GM12878 (cell line): ENCODE measurements at regions of chrX and their contacts with region 1.

Region 1: DNA sequence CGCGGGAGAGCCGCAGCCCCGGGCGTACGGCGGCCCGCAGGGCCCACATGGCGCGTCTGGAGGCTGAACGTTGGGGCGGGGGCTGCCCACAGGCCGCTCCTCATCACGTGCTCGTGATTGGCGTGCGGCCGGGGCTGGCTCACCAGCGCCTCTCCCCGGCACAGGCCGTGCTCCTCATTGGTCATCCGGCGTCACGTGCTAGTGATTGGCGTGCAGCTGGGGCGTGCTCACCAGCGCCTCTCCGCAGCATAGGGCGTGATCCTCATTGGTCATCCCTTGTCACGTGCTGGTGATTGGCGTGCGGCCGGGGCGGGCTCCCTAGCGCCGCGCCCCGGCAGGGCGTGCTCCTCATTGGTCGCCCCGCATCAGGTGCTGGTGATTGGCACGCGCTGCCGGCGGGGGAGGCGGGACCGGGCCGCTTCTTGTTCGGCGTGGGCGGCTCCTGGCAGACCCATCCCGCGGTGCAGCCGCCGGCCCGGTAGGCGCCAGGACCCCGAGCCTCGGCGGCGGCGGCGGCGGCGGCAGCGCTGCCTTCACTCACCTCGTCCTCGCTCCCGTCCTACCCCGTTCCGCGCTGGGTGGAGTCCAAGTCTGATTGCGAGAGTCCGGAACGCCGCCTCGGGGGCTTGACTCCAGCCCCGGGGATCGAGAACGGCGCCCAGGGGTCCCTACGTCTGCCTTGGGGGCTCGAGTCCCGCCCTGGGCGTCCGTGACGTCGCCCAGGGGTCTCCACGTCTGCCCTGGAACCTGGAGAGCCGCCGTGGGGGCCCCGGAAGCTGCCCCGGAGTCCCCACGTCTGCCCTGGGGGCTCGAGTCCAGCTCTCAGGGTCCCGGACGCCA is at the start of gene GTPBP6:
- DNase-seq: peak; percentile 99
- ATAC-seq: peak; percentile 84
- H3K4me3 ChIP-seq: peak within 1 kb of the TSS; percentile 86
- H3K27ac ChIP-seq: peak within 1 kb of the TSS; percentile 95
- H3K4me1 ChIP-seq: peaks cover 7% of the 10 kb centered on the region
- H3K27me3 ChIP-seq: no peaks in the 10 kb centered on the region
- CTCF ChIP-seq: peak in 1 of 3 experiments; percentile 35; a peak in 2 of 6 replicates
- EP300 ChIP-seq: no peak
- POLR2A ChIP-seq: peak; percentile 85
- RAD21 ChIP-seq: no peak
- polyA plus RNA-seq, gene GTPBP6: 0.31 to 1.9 TPM

Region 2: GRCh38 chrX:283115-283845 is 35.7 kb before region 1 on chrX:
- CTCF ChIA-PET with region 1: no interaction called
- POLR2A ChIA-PET with region 1: no interaction called
- RAD21 ChIA-PET with region 1: no interaction called
- SMC1A ChIA-PET with region 1: no interaction called
- in situ Hi-C with region 1: no loop called
- intact Hi-C with region 1: loop called (anchors 5 kb)
- DNase-seq: peak; percentile 86
- ATAC-seq: peak; percentile 99
- H3K4me3 ChIP-seq: peak overlapping the region; percentile 67
- H3K27ac ChIP-seq: peak overlapping the region; percentile 64
- H3K4me1 ChIP-seq: peaks cover 11% of the 10 kb centered on the region
- H3K27me3 ChIP-seq: no peaks in the 10 kb centered on the region
- CTCF ChIP-seq: no peak
- EP300 ChIP-seq: no peak
- POLR2A ChIP-seq: peak; percentile 70
- RAD21 ChIP-seq: no peak

Region 3: GRCh38 chrX:386768-387575 is 68.0 kb after region 1 on chrX and contains the start of gene PPP2R3B:
- CTCF ChIA-PET with region 1: no interaction called
- POLR2A ChIA-PET with region 1: no interaction called
- RAD21 ChIA-PET with region 1: no interaction called
- SMC1A ChIA-PET with region 1: no interaction called
- in situ Hi-C with region 1: no loop called
- intact Hi-C with region 1: loop called (anchors 2 kb)
- DNase-seq: peak; percentile 95
- ATAC-seq: peak; percentile 99
- H3K4me3 ChIP-seq: peak within 1 kb of the TSS; percentile 77
- H3K27ac ChIP-seq: peak within 1 kb of the TSS; percentile 99
- H3K4me1 ChIP-seq: no peaks in the 10 kb centered on the region
- H3K27me3 ChIP-seq: no peaks in the 10 kb centered on the region
- CTCF ChIP-seq: no peak
- EP300 ChIP-seq: no peak
- POLR2A ChIP-seq: peak; percentile 88
- RAD21 ChIP-seq: no peak
- polyA plus RNA-seq, gene PPP2R3B: 0.11 TPM in 1 of 2 experiments, not detected in the other

Region 4: GRCh38 chrX:989959-990510 is 671.1 kb after region 1 on chrX:
- CTCF ChIA-PET with region 1: no interaction called
- POLR2A ChIA-PET with region 1: no interaction called
- RAD21 ChIA-PET with region 1: no interaction called
- SMC1A ChIA-PET with region 1: no interaction called
- in situ Hi-C with region 1: no loop called
- intact Hi-C with region 1: no loop called
- DNase-seq: peak; percentile 97
- ATAC-seq: peak; percentile 98
- H3K4me3 ChIP-seq: peak overlapping the region; percentile 67
- H3K27ac ChIP-seq: peak overlapping the region; percentile 1; the same call in 1 of the 2 replicates
- H3K4me1 ChIP-seq: no peaks in the 10 kb centered on the region
- H3K27me3 ChIP-seq: no peaks in the 10 kb centered on the region
- CTCF ChIP-seq: no peak
- EP300 ChIP-seq: no peak
- POLR2A ChIP-seq: peak; percentile 61
- RAD21 ChIP-seq: no peak